Vagina (tissue), 2 donors: ENCODE measurements at regions of chrX and their contacts with region 1.

Region 1: DNA sequence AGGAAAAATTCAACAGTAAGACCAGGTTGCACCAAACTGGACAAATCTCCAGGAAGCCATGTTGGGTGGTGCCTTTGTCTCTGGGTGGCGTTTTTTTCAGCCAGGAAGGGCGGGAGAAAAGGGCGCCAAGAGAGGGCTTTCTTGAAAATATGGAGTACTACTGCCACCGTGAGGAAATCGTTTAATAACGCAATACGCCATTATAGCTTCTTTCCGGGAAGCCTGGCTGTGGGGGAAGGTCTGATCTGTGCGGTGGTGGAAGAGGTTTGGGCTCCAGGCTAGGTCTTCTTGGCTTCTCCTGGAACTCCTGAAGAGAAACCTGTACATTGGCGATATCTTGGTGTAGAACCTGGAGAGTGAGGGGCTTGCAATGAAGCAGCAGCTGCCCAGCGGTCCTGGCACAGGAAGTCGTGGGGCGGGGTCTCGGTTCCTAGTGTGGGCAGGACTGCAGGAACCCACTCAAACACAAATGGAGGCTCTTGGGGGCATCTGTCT is 202.6 kb downstream of the OR13H1 start:
- DNase-seq: no peak
- H3K4me3 ChIP-seq: peak overlapping the region; percentile 50 to 51
- H3K27ac ChIP-seq: peak overlapping the region; percentile 76
- H3K4me1 ChIP-seq: no peaks in the 10 kb centered on the region
- H3K27me3 ChIP-seq: no peaks in the 10 kb centered on the region
- CTCF ChIP-seq: peak in 2 of 3 experiments; percentile 13 to 64
- POLR2A ChIP-seq: no peak

Region 2: DNA sequence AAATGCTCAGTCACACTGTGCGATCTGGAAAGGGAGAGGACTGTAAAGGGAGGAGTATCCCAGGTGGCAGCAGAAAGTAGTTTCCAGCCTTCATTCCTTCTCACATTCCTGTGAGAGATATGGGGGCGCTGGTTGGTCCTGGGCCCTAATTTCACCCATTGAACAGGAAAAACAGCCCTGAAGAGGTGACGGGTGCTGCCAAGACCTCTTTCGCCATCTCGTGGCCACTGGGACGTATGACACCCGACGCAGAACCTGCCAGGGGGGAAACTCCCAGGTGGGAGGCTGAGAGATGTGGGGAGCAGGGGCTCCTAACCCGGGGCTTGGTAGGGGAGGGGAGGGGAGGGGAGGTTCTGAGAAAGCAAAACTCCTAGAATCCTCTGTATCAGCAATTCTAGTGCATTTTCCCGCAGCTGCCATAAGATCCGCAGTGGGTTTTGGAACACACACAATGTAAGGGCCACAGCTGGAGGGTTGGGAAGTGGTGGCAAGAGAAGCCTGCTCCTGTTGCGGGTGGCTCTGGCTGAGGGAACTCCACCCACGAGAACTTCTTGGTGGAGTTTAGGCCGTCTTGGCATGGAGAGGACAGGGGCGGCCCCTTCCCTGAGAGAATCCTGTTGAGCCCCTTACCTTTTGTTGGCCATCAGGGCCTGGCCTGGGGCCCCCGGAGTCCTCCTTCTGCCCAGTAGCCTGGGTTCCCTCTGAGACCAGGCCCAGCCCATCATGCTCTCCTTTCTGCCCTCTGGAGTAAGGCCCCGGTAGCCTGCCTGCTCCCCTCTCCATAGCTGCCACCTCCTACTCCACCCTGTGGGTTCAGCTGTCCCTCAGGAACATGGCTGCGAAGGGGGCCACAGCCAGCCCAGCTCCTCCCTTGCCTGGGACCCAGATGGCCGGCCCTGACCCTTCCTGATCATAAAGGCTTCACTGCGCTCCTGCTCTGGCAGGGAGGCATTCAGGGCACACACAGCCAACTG is 68.6 kb before region 1 on chrX:
- intact Hi-C with region 1: no loop called
- DNase-seq: no peak
- H3K4me3 ChIP-seq: no peak overlapping the region
- H3K27ac ChIP-seq: no peak overlapping the region
- H3K4me1 ChIP-seq: no peaks in the 10 kb centered on the region
- H3K27me3 ChIP-seq: no peaks in the 10 kb centered on the region
- CTCF ChIP-seq: peak in 1 of 3 experiments; percentile 29
- POLR2A ChIP-seq: no peak

Region 3: DNA sequence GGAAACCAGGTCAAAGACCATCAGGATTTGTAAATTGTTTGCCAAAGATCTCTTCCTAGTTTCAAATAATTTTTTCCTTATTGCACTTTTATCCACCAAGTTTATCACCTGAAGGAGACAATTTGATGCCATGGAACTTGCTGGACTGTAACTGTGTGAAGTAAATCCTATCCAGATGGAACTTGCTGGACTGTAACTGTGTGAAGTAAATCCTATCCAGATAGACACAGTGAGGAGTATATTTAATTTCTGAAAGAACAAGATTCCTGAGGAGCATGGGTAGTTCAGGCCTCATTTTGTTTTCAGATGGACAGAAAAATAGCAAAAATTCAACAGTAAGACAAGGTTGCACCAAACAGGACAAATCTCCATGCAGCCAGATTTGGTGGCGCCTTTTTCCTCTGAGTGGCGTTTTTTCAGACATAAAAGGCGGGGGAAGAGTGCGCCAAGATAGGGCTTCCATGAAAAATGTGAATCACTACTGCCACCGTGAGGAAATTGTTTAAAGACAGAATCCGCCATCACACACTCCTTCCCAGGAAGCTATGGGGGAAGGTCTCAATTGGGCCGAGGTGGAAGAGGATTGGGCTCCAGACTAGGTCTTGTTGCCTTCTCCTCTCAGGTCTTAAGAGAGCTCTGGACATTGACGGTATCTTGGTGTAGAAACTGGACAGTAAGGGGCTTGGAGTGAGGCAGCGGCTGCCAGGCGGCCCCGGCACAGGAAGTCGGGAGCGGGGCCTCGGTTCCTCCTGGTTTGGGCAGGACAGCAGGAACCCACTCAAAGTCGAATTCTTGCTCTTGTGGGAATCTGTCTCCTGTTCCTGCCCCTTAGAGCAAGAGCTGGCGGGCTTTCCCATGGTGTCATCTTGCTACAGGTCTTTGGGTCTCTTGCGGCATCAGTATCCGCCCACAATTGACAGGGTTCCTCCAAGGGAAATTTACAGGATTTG is 32.0 kb after region 1 on chrX:
- intact Hi-C with region 1: no loop called
- DNase-seq: no peak
- H3K4me3 ChIP-seq: peak overlapping the region; percentile 45 to 47
- H3K27ac ChIP-seq: peak overlapping the region; percentile 77
- H3K4me1 ChIP-seq: no peaks in the 10 kb centered on the region
- H3K27me3 ChIP-seq: no peaks in the 10 kb centered on the region
- CTCF ChIP-seq: peak in 2 of 3 experiments; percentile 44 to 63
- POLR2A ChIP-seq: no peak

Region 4: GRCh38 chrX:131792789-131793462 is 46.4 kb after region 1 on chrX:
- intact Hi-C with region 1: loop called (anchors 10 kb)
- DNase-seq: no peak
- H3K4me3 ChIP-seq: peak overlapping the region; percentile 42 to 45
- H3K27ac ChIP-seq: peak overlapping the region; percentile 79
- H3K4me1 ChIP-seq: no peaks in the 10 kb centered on the region
- H3K27me3 ChIP-seq: no peaks in the 10 kb centered on the region
- CTCF ChIP-seq: peak; percentile 27 to 59 (median 32)
- POLR2A ChIP-seq: no peak